ENCODE measurements at regions of chr14 and their contacts with region 1.

Region 1: DNA sequence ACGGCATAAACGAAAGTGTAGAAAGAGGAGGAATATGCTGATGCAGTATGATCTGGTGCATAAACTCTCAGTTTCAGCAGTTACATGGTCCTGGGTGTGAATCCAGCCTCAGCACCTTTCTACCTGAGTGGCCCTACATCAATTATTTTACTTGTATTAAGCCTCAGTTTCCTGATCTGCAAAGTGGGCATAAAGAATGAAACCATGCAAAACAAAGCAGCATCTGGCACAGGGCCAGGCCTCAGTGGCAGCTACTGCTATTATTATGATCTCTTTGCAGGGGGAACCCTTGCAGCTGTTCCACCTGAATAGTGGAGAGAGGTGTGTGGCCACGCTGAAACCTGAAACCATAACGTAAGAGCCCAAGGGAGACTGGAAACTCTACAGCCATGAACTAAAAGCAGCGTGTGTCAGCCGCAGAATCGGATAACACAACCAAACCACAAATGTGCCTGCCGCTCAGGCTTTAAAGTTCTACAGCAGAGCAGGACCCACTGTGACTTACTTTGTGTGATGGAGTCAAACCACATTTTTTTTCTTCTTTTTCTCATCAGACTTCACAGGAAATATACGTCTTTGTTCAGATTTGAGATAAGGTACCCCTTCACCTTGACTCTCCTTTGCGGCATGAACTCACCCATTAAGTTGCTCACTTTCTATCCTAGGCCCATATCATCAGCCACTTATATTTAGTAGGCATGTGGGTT is 29.2 kb upstream of the FOS start:
- DNase-seq: peak; percentile 96
- H3K4me3 Mint-ChIP-seq: peak overlapping the region; percentile 66
- H3K27ac Mint-ChIP-seq: peak overlapping the region; percentile 88
- H3K4me1 Mint-ChIP-seq: peaks cover 49% of the 10 kb centered on the region
- H3K27me3 Mint-ChIP-seq: peaks cover 34% of the 10 kb centered on the region

Region 2: DNA sequence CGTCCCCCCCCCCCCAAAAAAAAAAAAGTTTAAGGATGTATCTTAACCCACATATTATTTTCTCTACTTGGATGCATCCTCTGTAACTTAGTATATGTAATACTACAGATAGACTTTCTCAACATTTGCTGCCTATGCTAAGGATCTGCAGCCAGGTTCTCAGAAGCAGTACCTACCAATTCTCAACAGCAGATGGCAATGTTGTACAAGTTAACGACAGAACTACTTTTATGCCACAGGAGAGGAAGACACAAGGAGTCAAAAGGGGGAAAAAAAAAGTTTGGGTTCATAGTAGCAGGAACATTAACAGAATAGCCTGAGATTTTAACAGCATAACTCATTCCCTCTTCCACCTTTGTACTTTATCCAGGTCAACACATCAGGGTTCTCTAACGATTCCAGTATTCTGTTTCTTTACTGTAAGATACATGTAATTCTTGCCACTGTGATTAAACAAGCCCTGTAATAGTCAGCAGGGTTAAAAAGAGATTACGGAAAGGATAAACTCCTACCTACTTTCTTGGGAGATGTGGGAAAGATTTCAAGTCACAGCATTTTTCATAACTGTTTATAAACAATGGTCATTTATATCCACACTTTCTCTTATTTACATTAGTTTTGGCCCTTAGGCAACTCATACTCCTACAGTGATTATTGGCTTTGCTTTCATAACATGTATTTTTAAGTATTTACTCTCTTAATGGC is 116.9 kb before region 1 on chr14:
- intact Hi-C with region 1: loop called (anchors 2 kb)
- DNase-seq: peak; percentile 91
- H3K4me3 Mint-ChIP-seq: no peak overlapping the region
- H3K27ac Mint-ChIP-seq: no peak overlapping the region
- H3K4me1 Mint-ChIP-seq: peaks cover 13% of the 10 kb centered on the region
- H3K27me3 Mint-ChIP-seq: no peaks in the 10 kb centered on the region

Region 3: GRCh38 chr14:75230140-75231045 is 19.0 kb before region 1 on chr14:
- intact Hi-C with region 1: loop called (anchors 1 kb)
- DNase-seq: peak; percentile 79
- H3K4me3 Mint-ChIP-seq: peak overlapping the region; percentile 24
- H3K27ac Mint-ChIP-seq: peak overlapping the region; percentile 77
- H3K4me1 Mint-ChIP-seq: peaks cover 38% of the 10 kb centered on the region
- H3K27me3 Mint-ChIP-seq: peaks cover 9% of the 10 kb centered on the region

Region 4: DNA sequence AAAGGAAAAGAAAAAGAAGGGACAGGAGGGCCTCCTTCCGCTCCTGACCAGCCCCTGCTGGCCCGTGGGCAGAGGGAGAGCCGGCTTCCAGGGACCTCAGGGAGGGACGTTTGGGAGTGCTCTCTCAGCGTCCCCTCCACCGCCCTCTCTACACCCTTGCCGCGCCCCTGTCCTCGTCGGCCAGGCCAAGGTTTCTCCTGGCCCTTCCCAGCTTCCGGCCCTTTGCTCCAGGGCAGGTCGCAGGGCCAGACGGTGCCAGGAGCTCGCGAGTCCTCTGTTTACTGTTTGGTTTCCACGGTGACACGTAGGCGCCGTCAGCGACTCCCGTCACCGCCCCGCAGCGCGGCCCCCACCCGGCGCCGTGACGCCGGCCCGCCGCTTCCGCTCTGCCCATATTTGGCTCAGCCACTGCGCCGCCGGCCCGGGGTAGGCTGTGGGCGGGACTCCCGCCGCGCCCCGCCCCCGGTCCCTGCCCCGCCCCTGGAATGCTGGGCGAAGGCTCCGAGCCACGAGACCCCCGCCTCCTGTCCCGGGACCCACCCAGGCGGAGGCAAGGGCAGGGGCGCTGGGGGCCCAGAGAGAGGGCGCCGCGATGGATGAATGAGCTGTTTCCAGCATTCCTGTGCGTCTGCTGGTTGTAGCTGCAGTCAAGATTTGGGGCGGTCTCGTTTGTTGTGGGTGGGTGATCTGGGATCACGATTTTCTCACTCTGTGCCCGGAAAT is 44.7 kb after region 1 on chr14:
- intact Hi-C with region 1: loop called (anchors 1 kb)
- DNase-seq: peak; percentile 98
- H3K4me3 Mint-ChIP-seq: peak overlapping the region; percentile 88
- H3K27ac Mint-ChIP-seq: peak overlapping the region; percentile 95
- H3K4me1 Mint-ChIP-seq: peaks cover 18% of the 10 kb centered on the region
- H3K27me3 Mint-ChIP-seq: peaks cover 20% of the 10 kb centered on the region

Region 5: DNA sequence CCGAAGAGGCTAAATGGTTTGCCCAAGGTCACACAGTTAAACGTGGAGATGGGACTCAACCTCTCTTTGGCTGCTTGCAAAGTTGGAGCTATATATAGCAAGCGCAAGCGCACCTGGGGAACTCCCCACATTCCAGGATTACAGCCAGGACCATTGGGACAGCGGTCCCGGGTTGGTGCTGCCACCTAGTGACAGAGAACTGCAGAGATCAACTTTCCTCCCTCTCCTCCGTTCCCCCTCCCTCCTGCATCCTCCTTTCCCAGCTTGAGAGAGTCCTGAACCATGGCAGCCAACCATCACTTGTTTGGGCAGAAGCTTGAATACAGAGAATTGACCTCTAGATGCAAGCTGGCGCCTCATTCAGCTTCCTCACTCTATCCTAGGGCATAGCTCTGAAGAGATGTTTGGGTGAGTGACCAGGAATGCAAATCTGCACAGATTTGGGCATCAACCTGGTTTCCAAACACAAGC is 311.6 kb after region 1 on chr14:
- intact Hi-C with region 1: loop called (anchors 1 kb)
- DNase-seq: peak; percentile 84
- H3K4me3 Mint-ChIP-seq: peak overlapping the region; percentile 63
- H3K27ac Mint-ChIP-seq: peak overlapping the region; percentile 98
- H3K4me1 Mint-ChIP-seq: peaks cover 61% of the 10 kb centered on the region
- H3K27me3 Mint-ChIP-seq: no peaks in the 10 kb centered on the region

Measured in activated CD4-positive, alpha-beta T cell treated with anti-CD3 and anti-CD28 coated beads, Interleukin-2, amount 10 ng/mL, durations not matched to agents 24 days and 14 days (primary cell).